ENCODE measurements at regions of chr16 and their contacts with region 1.

Region 1: DNA sequence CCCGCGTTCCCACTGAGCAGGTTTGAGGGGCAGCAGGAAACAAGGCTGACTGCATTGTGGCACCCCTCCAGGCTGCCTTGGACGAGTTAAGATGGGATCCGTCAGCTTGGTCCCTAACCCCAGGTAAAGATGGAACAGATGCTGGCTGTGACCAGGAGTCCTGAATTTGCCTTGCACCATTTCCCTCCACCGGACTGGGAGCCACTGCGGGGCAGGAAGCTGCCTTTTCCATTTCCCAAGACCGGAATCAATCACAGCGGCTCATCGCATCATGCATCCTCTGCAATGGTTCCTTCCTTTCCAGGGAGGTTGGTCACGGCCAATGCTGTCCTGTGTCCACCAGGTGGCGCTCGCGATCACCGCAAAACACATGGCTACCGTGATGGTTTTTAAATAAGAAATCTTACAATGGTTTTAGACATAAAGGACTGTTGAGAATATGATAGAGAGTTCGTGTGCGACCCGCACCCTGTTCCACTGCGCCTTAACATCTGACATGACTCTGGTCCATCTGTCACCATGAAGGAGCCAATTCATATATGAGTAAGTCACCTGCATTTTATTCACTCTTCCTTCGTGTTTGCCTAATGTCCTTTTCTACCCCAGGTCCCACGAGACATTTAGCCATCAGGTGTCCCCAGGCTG is 6.8 kb upstream of the MEAK7 start:
- DNase-seq: peak; percentile 79 to 84 (median 81)
- ATAC-seq: peak; percentile 87
- H3K4me3 ChIP-seq: no peak overlapping the region
- H3K27ac ChIP-seq: no peak overlapping the region
- H3K4me1 ChIP-seq: peaks cover 8% of the 10 kb centered on the region
- H3K27me3 ChIP-seq: no peaks in the 10 kb centered on the region
- CTCF ChIP-seq: peak; percentile 87 to 99 (median 93)
- POLR2A ChIP-seq: no peak

Region 2: DNA sequence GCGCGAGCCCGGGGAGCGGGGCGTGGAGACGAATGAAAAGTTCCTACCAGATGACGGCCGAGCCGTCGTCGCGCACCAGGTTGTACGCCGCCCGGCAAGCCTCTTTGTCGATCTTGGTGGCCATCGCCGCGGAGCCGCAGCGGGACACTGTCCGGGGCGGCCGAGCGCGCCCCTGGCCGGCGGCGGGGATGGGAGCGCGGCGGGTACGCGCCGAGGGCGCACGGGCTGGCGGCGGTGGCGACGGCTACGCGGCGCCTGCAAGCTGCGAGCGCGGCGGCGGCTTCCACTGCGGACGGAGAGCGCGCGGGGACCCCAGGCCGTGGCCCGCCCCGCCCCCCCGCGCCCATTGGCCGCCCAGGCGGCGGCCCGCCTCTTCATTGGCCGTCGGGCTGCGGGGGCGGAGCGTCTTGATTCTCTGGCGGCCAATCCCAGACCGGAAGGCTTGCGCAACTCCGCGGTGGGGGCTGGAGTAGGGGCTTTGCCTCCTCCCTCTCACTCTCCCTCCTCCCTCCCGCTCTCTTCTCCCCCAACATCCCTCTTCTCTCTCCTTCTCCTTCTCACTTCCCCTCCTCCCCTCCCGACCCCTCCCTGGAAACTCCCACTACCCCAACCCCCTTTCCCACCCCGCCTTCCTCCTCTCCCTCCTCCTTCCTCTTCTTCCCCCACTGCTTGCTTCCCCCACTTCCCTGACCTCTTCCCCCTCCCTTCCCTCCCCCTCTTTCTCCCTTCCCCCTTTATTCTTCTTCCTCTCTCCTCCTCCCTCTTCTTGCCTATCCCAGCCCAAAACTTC is 106.7 kb after region 1 on chr16 and contains the start of gene COTL1:
- intact Hi-C with region 1: loop called (anchors 2 kb)
- DNase-seq: peak; percentile 93 to 96 (median 95)
- ATAC-seq: peak; percentile 86
- H3K4me3 ChIP-seq: peak within 1 kb of the TSS; percentile 49 to 60
- H3K27ac ChIP-seq: peak within 1 kb of the TSS; percentile 7 to 72 (median 60)
- H3K4me1 ChIP-seq: peaks cover 17% of the 10 kb centered on the region
- H3K27me3 ChIP-seq: no peaks in the 10 kb centered on the region
- CTCF ChIP-seq: peak in 1 of 7 experiments; percentile 8
- POLR2A ChIP-seq: no peak
- total RNA-seq, gene COTL1: 19.7 to 20.4 TPM

Region 3: DNA sequence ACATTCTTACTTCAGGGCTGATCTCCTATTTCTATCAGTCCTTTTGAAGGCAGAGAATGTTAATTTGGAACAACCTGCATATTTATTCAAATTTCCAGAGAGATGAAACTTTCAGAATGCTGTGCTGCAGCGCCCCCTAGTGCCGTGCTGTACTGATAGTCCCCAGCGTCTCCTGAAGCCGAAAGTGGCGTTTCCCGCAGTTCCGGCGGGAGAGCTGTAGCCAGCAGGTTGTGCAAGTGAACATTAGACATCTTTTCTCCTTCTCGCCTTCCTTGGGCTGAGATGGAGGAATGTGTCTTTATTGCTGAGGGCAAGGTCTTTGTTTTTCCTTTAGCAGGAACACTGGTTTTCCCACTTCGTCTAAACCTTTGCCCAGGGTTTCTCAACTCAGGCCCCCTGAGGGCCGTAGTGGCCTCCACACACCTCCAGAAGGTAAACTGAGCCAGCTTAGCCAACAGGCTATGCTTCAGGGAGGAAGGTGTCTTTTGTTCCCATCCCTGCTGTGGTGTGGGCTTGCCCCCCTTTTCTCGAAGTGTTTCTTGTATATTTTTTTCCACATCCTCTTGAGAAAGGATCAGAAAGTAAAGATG is 214.9 kb after region 1 on chr16:
- intact Hi-C with region 1: loop called (anchors 10 kb)
- DNase-seq: peak; percentile 86 to 93 (median 88)
- ATAC-seq: peak; percentile 84
- H3K4me3 ChIP-seq: no peak overlapping the region
- H3K27ac ChIP-seq: no peak overlapping the region
- H3K4me1 ChIP-seq: peaks cover 42% of the 10 kb centered on the region
- H3K27me3 ChIP-seq: no peaks in the 10 kb centered on the region
- CTCF ChIP-seq: peak; percentile 78 to 91 (median 88)
- POLR2A ChIP-seq: no peak

Measured in body of pancreas (tissue), 4 donors.